PC-3 (cell line): ENCODE measurements at regions of chr7 and their contacts with region 1.

Region 1: GRCh38 chr7:36152756-36153570 is at the start of gene EEPD1:
- DNase-seq: peak; percentile 98
- ATAC-seq: peak; percentile 82
- H3K4me3 ChIP-seq: peak within 1 kb of the TSS; percentile 84
- H3K27ac ChIP-seq: peak within 1 kb of the TSS; percentile 43
- H3K4me1 ChIP-seq: peaks cover 35% of the 10 kb centered on the region
- H3K27me3 ChIP-seq: no peaks in the 10 kb centered on the region
- CTCF ChIP-seq: no peak
- total RNA-seq, gene EEPD1: 28.3 and 31.8 TPM in 2 replicates

Region 2: GRCh38 chr7:35985126-35985754 is 167.7 kb before region 1 on chr7:
- CTCF ChIA-PET with region 1: interaction called, 4 read pairs
- POLR2A ChIA-PET with region 1: no interaction called
- intact Hi-C with region 1: loop called (anchors 1 kb)
- DNase-seq: peak; percentile 83
- ATAC-seq: peak; percentile 96
- H3K4me3 ChIP-seq: no peak overlapping the region
- H3K27ac ChIP-seq: no peak overlapping the region
- H3K4me1 ChIP-seq: peaks cover 29% of the 10 kb centered on the region
- H3K27me3 ChIP-seq: no peaks in the 10 kb centered on the region
- CTCF ChIP-seq: peak; percentile 91

Region 3: GRCh38 chr7:35993676-35994606 is 159.0 kb before region 1 on chr7:
- CTCF ChIA-PET with region 1: interaction called, 5 read pairs
- POLR2A ChIA-PET with region 1: no interaction called
- intact Hi-C with region 1: loop called (anchors 2 kb)
- DNase-seq: peak; percentile 94
- ATAC-seq: peak; percentile 75
- H3K4me3 ChIP-seq: no peak overlapping the region
- H3K27ac ChIP-seq: peak overlapping the region; percentile 87
- H3K4me1 ChIP-seq: peaks cover 29% of the 10 kb centered on the region
- H3K27me3 ChIP-seq: no peaks in the 10 kb centered on the region
- CTCF ChIP-seq: no peak

Region 4: DNA sequence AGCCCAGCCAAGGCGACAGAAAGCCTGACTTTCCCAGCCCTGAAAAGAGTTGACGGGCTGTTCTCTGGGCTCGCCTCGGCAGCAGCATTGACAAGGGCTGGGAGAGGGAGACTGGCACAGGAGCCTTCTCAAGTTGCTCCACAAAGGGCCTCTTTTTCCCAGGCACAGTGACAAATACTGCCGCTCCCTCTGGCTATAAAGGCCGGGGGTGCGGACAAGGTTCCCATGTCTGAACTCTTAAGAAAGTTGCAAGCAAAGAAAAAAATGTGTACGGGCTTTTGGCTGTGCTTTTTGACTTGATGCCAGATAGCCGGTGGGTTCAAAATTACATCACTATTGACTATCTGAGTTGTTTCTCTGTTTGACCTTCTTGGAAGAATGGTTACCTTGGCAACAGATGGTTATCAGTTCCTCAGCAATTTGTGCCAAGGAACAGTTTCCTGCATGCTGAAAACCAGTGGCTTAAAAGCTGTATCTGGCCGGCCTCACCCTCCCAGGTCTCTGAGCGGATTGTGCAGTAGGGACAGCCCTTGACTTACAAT is 115.8 kb before region 1 on chr7:
- CTCF ChIA-PET with region 1: no interaction called
- POLR2A ChIA-PET with region 1: no interaction called
- intact Hi-C with region 1: loop called (anchors 1 kb)
- DNase-seq: peak; percentile 99
- ATAC-seq: peak; percentile 68
- H3K4me3 ChIP-seq: peak overlapping the region; percentile 39
- H3K27ac ChIP-seq: peak overlapping the region; percentile 100
- H3K4me1 ChIP-seq: peaks cover 69% of the 10 kb centered on the region
- H3K27me3 ChIP-seq: no peaks in the 10 kb centered on the region
- CTCF ChIP-seq: no peak

Region 5: GRCh38 chr7:36115448-36116321 is 37.3 kb before region 1 on chr7:
- CTCF ChIA-PET with region 1: no interaction called
- POLR2A ChIA-PET with region 1: no interaction called
- intact Hi-C with region 1: loop called (anchors 1 kb)
- DNase-seq: peak; percentile 97
- ATAC-seq: peak; percentile 89
- H3K4me3 ChIP-seq: peak overlapping the region; percentile 17; the same call in 1 of the 2 replicates
- H3K27ac ChIP-seq: peak overlapping the region; percentile 95
- H3K4me1 ChIP-seq: peaks cover 51% of the 10 kb centered on the region
- H3K27me3 ChIP-seq: no peaks in the 10 kb centered on the region
- CTCF ChIP-seq: no peak

Region 6: DNA sequence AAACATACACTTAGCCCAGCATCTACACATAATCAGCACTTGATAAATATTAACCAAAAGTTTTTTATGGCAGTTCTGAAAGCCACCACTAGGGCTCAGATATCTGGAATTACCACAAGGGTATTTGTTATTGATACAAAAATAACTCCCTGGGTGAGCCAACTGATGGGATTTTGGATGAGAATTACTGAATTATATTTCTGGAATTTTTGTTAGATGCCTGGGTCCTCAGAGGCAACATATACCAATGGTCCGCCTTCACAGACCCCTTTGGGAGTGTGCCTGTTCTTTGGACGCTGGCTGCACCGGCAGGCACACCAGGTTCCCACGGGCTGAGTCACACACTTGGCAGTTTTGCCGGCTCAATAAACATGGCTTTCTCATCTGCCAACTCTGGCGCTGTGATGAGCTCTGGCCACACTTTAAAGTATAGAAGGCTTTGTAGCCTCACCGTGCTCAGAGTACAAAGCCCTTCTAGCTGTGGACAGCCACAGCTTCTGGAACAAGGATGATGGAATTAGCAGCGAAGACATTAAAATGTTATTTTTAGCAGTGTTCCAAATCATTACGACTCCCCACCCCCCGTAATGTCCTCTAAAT is 24.4 kb before region 1 on chr7:
- CTCF ChIA-PET with region 1: interaction called, 4 read pairs
- POLR2A ChIA-PET with region 1: no interaction called
- intact Hi-C with region 1: loop called (anchors 1 kb)
- DNase-seq: peak; percentile 96
- ATAC-seq: peak; percentile 89
- H3K4me3 ChIP-seq: peak overlapping the region; percentile 56
- H3K27ac ChIP-seq: peak overlapping the region; percentile 97
- H3K4me1 ChIP-seq: peaks cover 19% of the 10 kb centered on the region
- H3K27me3 ChIP-seq: no peaks in the 10 kb centered on the region
- CTCF ChIP-seq: peak; percentile 88

Region 7: DNA sequence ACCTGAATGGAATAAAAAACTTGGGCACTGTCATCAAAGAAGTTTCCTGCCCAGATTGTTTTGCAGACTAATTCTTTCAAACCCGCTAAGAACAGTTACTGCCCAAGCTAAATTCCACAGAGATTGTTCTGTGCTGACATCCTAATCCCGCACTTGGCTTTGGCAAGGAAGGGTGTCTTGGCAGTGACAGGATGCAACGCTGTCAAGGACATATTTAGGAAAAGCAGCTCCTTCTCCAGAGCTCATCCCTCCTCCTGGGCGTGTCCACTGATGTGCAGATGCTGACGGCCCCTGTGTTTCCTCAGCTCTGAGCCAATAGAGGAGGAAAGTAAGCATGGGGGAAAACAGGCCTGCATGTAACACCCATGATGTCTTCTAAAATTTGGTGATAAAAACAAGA is 74.3 kb after region 1 on chr7:
- CTCF ChIA-PET with region 1: no interaction called
- POLR2A ChIA-PET with region 1: no interaction called
- intact Hi-C with region 1: no loop called
- DNase-seq: no peak
- ATAC-seq: no peak
- H3K4me3 ChIP-seq: no peak overlapping the region
- H3K27ac ChIP-seq: no peak overlapping the region
- H3K4me1 ChIP-seq: peaks cover under 1% of the 10 kb centered on the region; the same call in 1 of the 2 replicates
- H3K27me3 ChIP-seq: no peaks in the 10 kb centered on the region
- CTCF ChIP-seq: no peak

Region 8: GRCh38 chr7:36312344-36313334 is 159.7 kb after region 1 on chr7:
- CTCF ChIA-PET with region 1: no interaction called
- POLR2A ChIA-PET with region 1: no interaction called
- intact Hi-C with region 1: no loop called
- DNase-seq: no peak
- ATAC-seq: no peak
- H3K4me3 ChIP-seq: no peak overlapping the region
- H3K27ac ChIP-seq: no peak overlapping the region
- H3K4me1 ChIP-seq: no peaks in the 10 kb centered on the region
- H3K27me3 ChIP-seq: no peaks in the 10 kb centered on the region
- CTCF ChIP-seq: no peak

Region 9: DNA sequence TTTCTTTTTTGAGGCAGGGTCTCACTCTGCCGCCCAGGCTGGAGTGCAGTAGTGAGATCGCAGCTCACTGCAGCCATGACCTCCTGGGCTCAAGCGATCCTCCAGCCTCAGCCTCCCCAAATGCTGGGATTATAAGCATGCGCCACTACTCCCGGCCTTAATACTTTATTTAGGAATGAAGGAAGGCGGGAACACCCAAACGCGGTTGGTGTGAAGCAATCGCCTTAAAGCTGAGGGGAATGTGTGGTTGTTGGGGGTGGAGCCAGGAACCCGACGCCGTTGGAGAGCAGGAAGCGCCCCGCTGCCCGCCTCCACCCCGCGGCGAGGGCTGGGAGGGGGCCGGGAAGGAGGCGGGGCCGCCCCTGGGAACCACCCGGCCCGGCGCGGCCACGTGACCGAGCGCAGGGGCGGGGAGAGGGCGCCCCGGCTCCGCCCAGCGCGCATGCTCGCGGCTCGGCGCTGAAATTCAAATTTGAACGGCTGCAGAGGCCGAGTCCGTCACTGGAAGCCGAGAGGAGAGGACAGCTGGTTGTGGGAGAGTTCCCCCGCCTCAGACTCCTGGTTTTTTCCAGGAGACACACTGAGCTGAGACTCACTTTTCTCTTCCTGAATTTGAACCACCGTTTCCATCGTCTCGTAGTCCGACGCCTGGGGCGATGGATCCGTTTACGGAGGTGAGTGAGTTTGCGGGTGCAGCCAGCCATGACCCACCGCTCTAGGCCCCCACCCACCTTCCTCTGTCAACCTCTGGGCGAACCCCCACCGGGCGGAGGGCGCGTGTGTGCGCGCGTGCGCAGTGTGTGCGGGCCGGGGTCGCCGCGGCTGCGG is 236.6 kb after region 1 on chr7 and contains the start of gene ANLN:
- CTCF ChIA-PET with region 1: interaction called, 5 read pairs
- POLR2A ChIA-PET with region 1: no interaction called
- intact Hi-C with region 1: loop called (anchors 2 kb)
- DNase-seq: peak; percentile 94
- ATAC-seq: peak; percentile 68
- H3K4me3 ChIP-seq: peak within 1 kb of the TSS; percentile 90
- H3K27ac ChIP-seq: peak within 1 kb of the TSS; percentile 96
- H3K4me1 ChIP-seq: peaks cover 35% of the 10 kb centered on the region
- H3K27me3 ChIP-seq: no peaks in the 10 kb centered on the region
- CTCF ChIP-seq: no peak
- total RNA-seq, gene ANLN: 110 and 111 TPM in 2 replicates